ENCODE measurements at regions of chr18 and their contacts with region 1.

Region 1: GRCh38 chr18:564708-565561 is 15.2 kb upstream of the CETN1 start:
- DNase-seq: no peak
- H3K4me3 ChIP-seq: no peak overlapping the region
- CTCF ChIP-seq: no peak

Region 2: GRCh38 chr18:484749-485464 is 80.0 kb before region 1 on chr18:
- in situ Hi-C with region 1: no loop called
- DNase-seq: no peak
- H3K4me3 ChIP-seq: no peak overlapping the region
- CTCF ChIP-seq: no peak

Region 3: DNA sequence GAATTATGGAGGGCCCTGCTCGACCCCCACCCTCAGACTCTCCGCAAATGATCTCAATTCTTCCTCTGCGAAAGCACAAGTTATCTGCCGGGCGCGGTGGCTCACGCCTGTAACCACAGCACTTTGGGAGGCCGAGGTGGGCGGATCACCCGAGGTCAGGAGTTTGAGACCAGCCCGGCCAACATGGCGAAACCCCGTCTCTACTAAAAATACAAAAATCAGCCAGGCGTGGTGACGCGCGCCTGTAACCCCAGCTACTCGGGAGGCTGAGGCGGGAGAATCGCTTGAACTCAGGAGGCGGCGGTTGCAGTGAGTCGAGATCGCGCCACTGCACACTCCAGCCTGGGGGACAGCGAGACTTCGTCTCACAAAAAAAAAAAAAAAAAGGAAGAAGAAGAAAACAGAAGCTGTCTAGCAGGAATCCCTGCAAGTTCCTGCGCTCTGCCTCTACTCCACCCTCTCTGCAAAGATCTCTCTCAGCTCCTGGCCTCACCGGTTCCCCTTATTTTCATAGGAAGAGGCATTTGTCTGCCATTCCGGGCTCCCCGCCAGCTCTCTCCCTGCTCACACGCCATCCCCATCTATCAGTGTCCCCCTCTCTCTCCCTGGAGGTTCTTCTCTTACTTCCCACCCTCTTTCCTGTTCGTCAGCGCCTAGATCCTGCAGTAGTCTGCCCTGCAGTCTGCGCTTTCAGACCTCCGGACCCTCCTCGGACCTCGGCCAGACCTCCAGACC is 50.9 kb before region 1 on chr18:
- in situ Hi-C with region 1: no loop called
- DNase-seq: no peak
- H3K4me3 ChIP-seq: no peak overlapping the region
- CTCF ChIP-seq: no peak

Region 4: DNA sequence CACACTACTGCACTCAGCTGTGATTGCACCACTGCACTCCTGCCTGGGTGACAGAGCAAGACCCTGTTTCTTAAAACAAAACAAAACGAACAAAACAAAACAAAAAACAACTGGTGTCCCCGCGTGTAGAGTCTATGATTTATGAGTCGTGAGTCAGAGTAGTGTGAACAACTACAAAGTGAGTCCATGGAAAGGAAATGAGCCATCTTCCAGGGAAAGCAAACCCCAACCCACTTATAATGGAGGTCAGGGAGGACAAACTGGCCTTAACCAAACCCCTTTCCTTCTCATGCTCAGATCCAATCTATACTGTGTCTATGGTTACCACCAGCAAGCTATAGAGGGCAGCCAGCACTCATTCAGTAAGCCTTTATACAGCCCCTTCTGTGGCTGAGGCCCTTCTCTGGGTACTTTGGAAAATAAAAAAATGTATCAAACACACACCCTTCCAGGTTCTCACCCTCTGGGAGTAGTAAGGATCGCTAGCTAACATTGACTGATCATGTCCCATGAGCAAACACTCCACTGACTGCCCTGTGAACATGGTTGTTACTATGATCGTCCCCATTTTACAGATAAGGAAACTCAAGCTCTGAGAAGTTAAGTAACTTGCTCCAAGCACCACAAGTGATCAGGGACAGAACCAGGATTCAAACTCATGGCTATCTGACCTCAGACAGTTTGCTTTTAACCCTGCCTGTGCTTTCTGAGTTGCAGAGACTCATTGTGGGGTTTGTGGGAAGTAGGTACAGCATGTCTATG is 39.7 kb before region 1 on chr18:
- in situ Hi-C with region 1: loop called (anchors 5 kb)
- DNase-seq: peak; percentile 20
- H3K4me3 ChIP-seq: no peak overlapping the region
- CTCF ChIP-seq: no peak